T-cell (primary cell): ENCODE measurements at regions of chr11 and their contacts with region 1.

Region 1: DNA sequence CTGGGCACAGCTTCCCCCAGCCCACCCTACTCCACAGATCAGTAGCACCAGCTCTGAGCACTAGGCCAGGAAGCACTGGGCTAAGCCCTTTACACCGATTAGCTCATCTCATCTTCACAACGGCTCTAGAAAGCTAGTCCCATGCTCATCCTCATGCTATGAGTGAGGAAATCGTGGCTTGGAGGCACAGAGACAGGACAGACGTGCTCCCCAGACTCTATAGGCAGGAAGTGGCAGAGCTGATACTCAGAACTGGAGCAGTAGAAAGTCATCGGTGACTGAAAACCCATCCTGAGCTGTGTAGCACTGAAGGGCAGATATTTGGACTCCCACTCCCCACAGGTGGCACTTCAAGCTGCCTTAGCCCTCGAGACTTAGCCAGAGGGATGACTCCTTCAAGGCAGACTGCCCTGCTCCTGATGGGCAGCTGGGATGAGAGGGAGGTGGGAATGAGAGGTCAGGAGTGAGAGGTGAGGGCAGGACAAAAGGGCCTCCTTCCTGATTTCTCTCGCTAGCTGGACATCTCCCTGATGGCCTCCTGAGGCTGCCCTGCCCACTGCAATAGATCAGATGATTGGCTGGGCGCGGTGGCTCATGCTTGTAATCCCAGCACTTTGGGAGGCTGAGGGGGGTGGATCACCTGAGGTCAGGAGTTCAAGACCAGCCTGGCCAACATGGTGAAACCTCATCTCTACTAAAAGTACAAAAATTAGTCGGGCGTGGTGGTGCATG is 9.7 kb downstream of the CD5 start:
- DNase-seq: peak in 32 of 35 experiments; percentile 41 to 77 (median 58)
- ATAC-seq: peak; percentile 80 to 89 (median 84)
- H3K4me3 ChIP-seq: peak overlapping the region; percentile 4 to 15
- H3K4me3 Mint-ChIP-seq: peak overlapping the region in 2 of 3 donors; percentile 57 to 73
- H3K27ac ChIP-seq: peak overlapping the region; percentile 86
- H3K27ac Mint-ChIP-seq: peak overlapping the region in 1 of 2 donors; percentile 82
- H3K4me1 ChIP-seq: peaks cover 78 to 95% of the 10 kb centered on the region in 2 experiments
- H3K4me1 Mint-ChIP-seq: peaks cover 94 to 98% (median 97%) of the 10 kb centered on the region in 3 donors
- H3K27me3 ChIP-seq: no peaks in the 10 kb centered on the region
- H3K27me3 Mint-ChIP-seq: no peaks in the 10 kb centered on the region

Region 2: DNA sequence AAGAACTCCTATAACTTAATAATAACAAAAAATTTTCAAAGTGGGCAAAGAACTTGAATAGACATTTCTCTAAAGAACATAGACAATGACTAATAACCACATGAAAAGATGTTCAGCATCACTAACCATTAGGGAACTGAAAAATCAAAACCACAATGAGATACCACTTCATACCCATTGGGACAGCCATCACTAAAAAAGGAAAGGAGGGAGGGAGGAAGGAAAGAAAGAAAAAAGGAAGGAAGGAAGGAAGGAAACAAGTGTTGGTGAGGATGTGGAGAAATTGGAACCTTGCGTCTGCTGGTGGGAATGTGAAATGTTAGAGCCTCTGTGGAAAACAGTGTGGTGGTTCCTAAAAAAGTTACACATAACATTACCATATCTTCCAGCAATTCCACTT is 541.0 kb before region 1 on chr11:
- CTCF ChIA-PET with region 1: no interaction called
- POLR2A ChIA-PET with region 1: no interaction called
- DNase-seq: no peak
- ATAC-seq: no peak
- H3K4me3 ChIP-seq: no peak overlapping the region
- H3K4me3 Mint-ChIP-seq: no peak overlapping the region
- H3K27ac ChIP-seq: no peak overlapping the region
- H3K27ac Mint-ChIP-seq: no peak overlapping the region
- H3K4me1 ChIP-seq: no peaks in the 10 kb centered on the region
- H3K4me1 Mint-ChIP-seq: no peaks in the 10 kb centered on the region
- H3K27me3 ChIP-seq: peaks cover 0 to 7% of the 10 kb centered on the region in 2 experiments
- H3K27me3 Mint-ChIP-seq: peaks cover 10 to 19% of the 10 kb centered on the region in 2 donors

Region 3: GRCh38 chr11:61061081-61061826 is 50.7 kb before region 1 on chr11:
- CTCF ChIA-PET with region 1: interaction called in 1 of 2 experiments, 5 read pairs
- POLR2A ChIA-PET with region 1: interaction called in 1 of 2 experiments, 10 read pairs
- DNase-seq: peak in 31 of 35 experiments; percentile 22 to 88 (median 48)
- ATAC-seq: peak; percentile 72 to 85 (median 74)
- H3K4me3 ChIP-seq: peak overlapping the region in 1 of 2 donors; percentile 26
- H3K4me3 Mint-ChIP-seq: peak overlapping the region; percentile 74 to 80 (median 79)
- H3K27ac ChIP-seq: peak overlapping the region; percentile 90
- H3K27ac Mint-ChIP-seq: peak overlapping the region; percentile 97
- H3K4me1 ChIP-seq: peaks cover 21 to 80% of the 10 kb centered on the region in 2 experiments
- H3K4me1 Mint-ChIP-seq: peaks cover 64 to 75% (median 68%) of the 10 kb centered on the region in 3 donors
- H3K27me3 ChIP-seq: no peaks in the 10 kb centered on the region
- H3K27me3 Mint-ChIP-seq: no peaks in the 10 kb centered on the region

Region 4: DNA sequence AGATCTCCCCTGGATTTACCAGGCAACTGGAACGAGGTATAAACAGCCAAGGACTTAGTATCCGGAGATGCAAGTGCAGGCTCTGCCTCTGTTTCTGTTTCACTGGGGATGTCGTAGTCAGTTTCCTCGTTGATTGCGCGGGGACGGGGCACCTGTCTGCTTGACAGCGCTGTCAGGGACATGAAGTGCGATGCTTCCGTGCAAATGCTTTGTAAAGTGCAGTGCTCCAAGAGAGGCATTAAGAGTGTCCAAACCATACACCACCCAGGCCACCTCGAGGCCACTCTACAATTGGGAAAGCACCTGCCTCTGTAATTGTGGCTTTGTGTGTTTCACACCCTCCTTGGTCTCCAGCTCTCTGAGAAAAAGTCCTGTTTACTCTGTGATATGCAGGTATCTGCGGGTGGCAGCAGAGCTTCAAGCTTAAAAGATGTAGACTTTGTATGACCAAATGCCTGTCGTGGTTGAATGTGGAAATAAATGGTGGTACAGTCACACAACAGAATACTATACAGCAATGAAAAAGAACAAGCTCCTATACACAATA is 28.3 kb before region 1 on chr11:
- CTCF ChIA-PET with region 1: interaction called in 1 of 2 experiments, 11 read pairs
- POLR2A ChIA-PET with region 1: interaction called, 3 to 4 read pairs
- DNase-seq: peak; percentile 57 to 88 (median 71)
- ATAC-seq: peak; percentile 68 to 76 (median 72)
- H3K4me3 ChIP-seq: peak overlapping the region in 1 of 2 donors; percentile 12
- H3K4me3 Mint-ChIP-seq: peak overlapping the region; percentile 72 to 86 (median 78)
- H3K27ac ChIP-seq: peak overlapping the region; percentile 89
- H3K27ac Mint-ChIP-seq: peak overlapping the region; percentile 99 to 100
- H3K4me1 ChIP-seq: peaks cover 45 to 54% of the 10 kb centered on the region in 2 experiments
- H3K4me1 Mint-ChIP-seq: peaks cover 54 to 63% (median 55%) of the 10 kb centered on the region in 3 donors
- H3K27me3 ChIP-seq: no peaks in the 10 kb centered on the region
- H3K27me3 Mint-ChIP-seq: no peaks in the 10 kb centered on the region

Region 5: GRCh38 chr11:61147791-61148561 is 36.0 kb after region 1 on chr11:
- CTCF ChIA-PET with region 1: no interaction called
- POLR2A ChIA-PET with region 1: no interaction called
- DNase-seq: no peak
- ATAC-seq: no peak
- H3K4me3 ChIP-seq: no peak overlapping the region
- H3K4me3 Mint-ChIP-seq: no peak overlapping the region
- H3K27ac ChIP-seq: no peak overlapping the region
- H3K27ac Mint-ChIP-seq: no peak overlapping the region
- H3K4me1 ChIP-seq: peaks cover 0 to 10% of the 10 kb centered on the region in 2 experiments
- H3K4me1 Mint-ChIP-seq: peaks cover 12 to 39% (median 19%) of the 10 kb centered on the region in 3 donors
- H3K27me3 ChIP-seq: no peaks in the 10 kb centered on the region
- H3K27me3 Mint-ChIP-seq: no peaks in the 10 kb centered on the region

Region 6: DNA sequence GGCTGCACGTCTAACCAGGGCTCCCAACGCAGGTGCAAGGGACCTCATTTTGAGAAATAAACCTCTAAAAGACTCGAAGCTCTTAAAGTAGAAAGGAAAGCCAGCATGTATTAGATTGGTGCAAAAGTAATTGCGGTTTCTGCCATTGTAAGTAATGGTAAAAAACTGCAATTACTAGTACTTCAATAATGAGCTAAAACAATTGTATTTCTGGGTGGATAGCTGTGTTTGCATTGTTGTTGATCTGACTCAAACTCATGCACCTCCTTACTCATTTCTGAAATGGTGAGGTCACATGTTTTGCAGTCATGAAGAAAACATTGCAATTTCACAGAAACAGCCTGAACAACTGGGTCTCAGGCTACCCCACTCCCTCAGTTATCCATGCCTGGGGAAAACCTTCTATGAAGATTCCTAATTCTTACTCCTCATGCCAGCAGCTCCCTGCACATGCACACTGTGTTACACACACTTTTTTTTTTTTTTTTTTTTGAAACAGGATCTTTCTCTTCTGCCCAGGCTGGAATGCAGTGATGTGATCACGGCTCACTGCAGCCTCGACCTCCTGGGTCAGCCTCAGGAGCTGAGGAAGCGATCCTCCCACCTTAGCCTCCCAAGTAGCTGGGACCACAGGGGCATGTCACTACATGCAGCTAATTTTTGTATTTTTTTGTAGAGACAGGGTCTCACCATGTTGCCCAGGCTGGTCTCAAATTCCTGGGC is 158.6 kb after region 1 on chr11:
- CTCF ChIA-PET with region 1: no interaction called
- POLR2A ChIA-PET with region 1: no interaction called
- DNase-seq: no peak
- ATAC-seq: no peak
- H3K4me3 ChIP-seq: no peak overlapping the region
- H3K4me3 Mint-ChIP-seq: no peak overlapping the region
- H3K27ac ChIP-seq: no peak overlapping the region
- H3K27ac Mint-ChIP-seq: no peak overlapping the region
- H3K4me1 ChIP-seq: no peaks in the 10 kb centered on the region
- H3K4me1 Mint-ChIP-seq: no peaks in the 10 kb centered on the region
- H3K27me3 ChIP-seq: peaks cover 0 to 18% of the 10 kb centered on the region in 2 experiments
- H3K27me3 Mint-ChIP-seq: peaks cover 0 to 2% of the 10 kb centered on the region in 2 donors